ENCODE measurements at regions of chr9 and their contacts with region 1.

Region 1: GRCh38 chr9:91422758-91423711 is 597 bp downstream of the NFIL3 start:
- DNase-seq: peak; percentile 79
- ATAC-seq: peak; percentile 48
- H3K4me3 Mint-ChIP-seq: peak overlapping the region; percentile 90
- H3K27ac Mint-ChIP-seq: peak overlapping the region; percentile 77
- H3K4me1 Mint-ChIP-seq: peaks cover 47% of the 10 kb centered on the region
- H3K27me3 Mint-ChIP-seq: peaks cover 7% of the 10 kb centered on the region

Region 2: DNA sequence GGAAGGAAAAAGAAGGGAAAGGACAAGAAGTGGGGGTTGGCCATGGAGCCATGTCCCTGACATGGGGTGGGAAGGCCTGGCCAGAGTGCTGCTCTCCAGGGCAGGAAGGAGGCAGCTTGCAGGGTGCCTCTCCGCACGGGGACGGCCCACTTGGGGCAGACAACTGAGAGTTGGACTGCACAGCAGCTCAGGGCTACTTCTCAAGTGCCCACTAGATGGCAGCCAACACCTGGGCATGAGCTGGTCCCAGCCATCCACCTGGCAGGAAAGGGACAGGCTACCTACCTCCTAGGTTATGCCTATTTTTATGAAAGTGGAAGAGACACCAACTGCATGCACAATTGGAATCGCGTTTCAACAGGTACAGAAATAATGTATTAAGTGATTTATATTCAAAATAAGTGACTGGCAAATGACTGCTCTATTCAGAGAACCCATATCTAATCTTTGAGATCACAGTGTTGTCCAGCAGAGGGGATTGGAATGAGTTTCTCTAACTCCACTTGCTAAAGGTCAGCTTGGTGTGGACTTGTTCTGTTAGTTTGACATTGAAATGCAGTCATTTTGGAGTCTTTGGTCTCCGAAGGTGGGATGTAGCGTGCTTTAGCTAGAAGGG is 508.1 kb before region 1 on chr9:
- POLR2A ChIA-PET with region 1: interaction called, 12 read pairs
- DNase-seq: peak; percentile 75
- ATAC-seq: peak; percentile 94
- H3K4me3 Mint-ChIP-seq: no peak overlapping the region
- H3K27ac Mint-ChIP-seq: no peak overlapping the region
- H3K4me1 Mint-ChIP-seq: no peaks in the 10 kb centered on the region
- H3K27me3 Mint-ChIP-seq: no peaks in the 10 kb centered on the region

Region 3: DNA sequence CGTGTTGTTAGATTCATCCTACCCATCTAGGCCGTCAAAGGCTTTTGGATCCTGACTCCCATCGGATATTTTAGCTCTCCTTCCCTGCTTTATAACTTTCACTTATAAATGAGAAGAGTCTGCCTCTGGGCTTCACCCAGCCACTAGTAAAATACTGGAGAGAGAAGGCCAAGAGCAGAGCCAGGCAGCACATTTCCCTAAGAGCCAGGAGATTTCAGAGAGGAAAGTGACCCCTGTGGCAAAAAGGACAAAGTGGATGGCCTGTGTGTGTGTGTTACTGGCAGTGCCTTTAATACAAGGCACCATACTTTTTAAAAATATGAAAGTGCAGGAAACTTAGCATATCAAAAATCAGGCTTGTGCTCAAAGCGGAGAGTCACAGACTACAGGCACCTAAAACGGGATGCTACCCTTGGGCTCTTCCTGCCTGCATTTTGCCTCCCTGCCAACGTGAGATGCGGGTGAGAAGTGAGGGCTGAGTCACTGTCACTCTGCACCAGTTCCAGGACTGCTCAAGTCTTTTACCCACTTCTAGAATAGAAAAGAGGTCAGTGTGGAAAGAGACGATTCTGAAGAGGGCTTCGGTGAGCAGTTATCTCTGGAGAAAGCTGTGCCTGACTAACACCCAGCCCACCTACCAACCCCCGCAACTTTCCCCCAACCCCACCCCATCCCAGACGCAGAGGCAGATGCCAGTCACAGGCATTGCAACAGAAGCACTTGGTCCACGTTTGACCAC is 15.3 kb before region 1 on chr9:
- POLR2A ChIA-PET with region 1: no interaction called
- DNase-seq: no peak
- ATAC-seq: no peak
- H3K4me3 Mint-ChIP-seq: no peak overlapping the region
- H3K27ac Mint-ChIP-seq: no peak overlapping the region
- H3K4me1 Mint-ChIP-seq: peaks cover 28% of the 10 kb centered on the region
- H3K27me3 Mint-ChIP-seq: peaks cover 2% of the 10 kb centered on the region

Region 4: DNA sequence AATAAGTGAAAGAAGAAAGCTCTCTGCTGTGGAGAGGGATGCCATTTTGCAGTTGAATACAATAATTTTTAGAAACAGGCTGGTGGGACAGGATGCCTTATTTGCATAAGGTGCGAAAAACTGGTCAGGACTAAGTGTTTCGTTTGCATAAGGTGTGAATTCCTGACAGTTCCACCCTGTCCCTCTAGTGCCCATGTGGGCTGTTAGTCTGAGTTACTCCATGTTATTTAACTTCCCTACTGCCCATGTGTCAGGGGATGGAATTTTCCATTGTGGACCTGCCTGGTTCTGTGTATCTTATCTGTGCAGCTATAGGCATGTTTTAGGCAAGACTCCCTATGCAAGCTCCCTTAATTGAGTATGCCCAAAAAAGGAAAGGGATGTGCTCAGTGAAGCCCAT is 35.9 kb after region 1 on chr9:
- POLR2A ChIA-PET with region 1: no interaction called
- DNase-seq: no peak
- ATAC-seq: no peak
- H3K4me3 Mint-ChIP-seq: no peak overlapping the region
- H3K27ac Mint-ChIP-seq: no peak overlapping the region
- H3K4me1 Mint-ChIP-seq: no peaks in the 10 kb centered on the region
- H3K27me3 Mint-ChIP-seq: peaks cover 43% of the 10 kb centered on the region

Region 5: GRCh38 chr9:91580136-91580535 is 157.1 kb after region 1 on chr9:
- POLR2A ChIA-PET with region 1: no interaction called
- DNase-seq: no peak
- ATAC-seq: peak; percentile 54
- H3K4me3 Mint-ChIP-seq: no peak overlapping the region
- H3K27ac Mint-ChIP-seq: no peak overlapping the region
- H3K4me1 Mint-ChIP-seq: peaks cover 2% of the 10 kb centered on the region
- H3K27me3 Mint-ChIP-seq: peaks cover 4% of the 10 kb centered on the region